ENCODE measurements at regions of chr10 and their contacts with region 1.

Region 1: GRCh38 chr10:30013757-30014156 is 45.6 kb downstream of the JCAD start:
- DNase-seq: no peak
- H3K4me3 Mint-ChIP-seq: peak overlapping the region; percentile 70
- H3K27ac Mint-ChIP-seq: peak overlapping the region; percentile 94
- H3K4me1 Mint-ChIP-seq: peaks cover 68% of the 10 kb centered on the region
- H3K27me3 Mint-ChIP-seq: no peaks in the 10 kb centered on the region

Region 2: DNA sequence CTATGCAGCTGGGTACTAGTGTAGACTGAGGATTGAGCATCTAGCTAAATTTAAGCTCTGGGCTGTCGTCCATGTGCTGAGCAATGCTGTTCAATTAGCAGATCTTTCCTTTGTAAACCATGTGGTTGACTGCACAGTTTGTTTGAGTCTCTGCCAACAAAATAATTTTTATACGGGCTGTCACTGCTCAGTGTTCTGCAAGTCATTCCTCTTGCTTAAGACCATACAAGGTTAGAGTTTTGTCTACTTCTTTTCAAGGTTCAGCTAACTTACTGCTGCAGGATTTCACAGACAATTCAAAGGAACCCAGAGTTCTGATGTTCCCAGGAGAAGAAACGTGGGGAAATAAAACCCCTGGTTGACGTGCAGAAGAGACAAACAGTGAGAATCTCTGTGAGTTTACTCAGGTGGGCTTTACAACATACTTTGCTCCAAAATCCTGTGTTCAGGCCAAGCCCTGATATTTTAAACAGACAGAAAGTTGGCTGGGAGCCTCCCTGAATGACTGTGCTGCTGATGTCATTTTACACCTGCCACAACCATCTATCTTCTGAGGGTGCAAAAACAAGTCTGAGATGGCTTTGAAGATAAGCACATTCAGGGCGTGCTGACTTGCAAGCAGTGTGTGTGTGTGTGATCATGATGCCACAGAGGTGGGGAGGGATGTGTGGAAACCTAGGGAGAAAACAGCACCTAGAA is 201.9 kb before region 1 on chr10:
- intact Hi-C with region 1: no loop called
- DNase-seq: peak; percentile 51
- H3K4me3 Mint-ChIP-seq: no peak overlapping the region
- H3K27ac Mint-ChIP-seq: peak overlapping the region; percentile 40
- H3K4me1 Mint-ChIP-seq: peaks cover 25% of the 10 kb centered on the region
- H3K27me3 Mint-ChIP-seq: peaks cover 7% of the 10 kb centered on the region

Region 3: DNA sequence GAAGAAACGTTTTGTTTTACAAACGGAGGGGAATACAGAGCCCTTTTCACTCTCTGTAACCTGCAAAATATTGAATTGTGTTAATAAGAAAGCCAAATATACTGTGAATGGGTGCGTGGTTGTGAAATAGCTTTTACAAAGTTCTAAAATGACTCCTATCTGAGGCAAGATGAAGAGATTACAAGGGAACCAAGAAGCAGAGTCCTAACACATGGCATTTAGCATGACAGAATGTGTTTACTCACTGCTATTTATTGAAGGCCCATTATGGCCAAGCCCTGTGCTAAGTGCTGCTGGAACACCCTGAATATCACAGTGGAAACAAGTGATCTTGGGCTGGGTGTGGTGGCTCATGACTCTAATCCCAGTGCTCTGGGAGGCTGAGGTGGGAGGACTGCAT is 32.7 kb after region 1 on chr10:
- intact Hi-C with region 1: loop called (anchors 1 kb)
- DNase-seq: no peak
- H3K4me3 Mint-ChIP-seq: no peak overlapping the region
- H3K27ac Mint-ChIP-seq: peak overlapping the region; percentile 50
- H3K4me1 Mint-ChIP-seq: peaks cover 76% of the 10 kb centered on the region
- H3K27me3 Mint-ChIP-seq: peaks cover 9% of the 10 kb centered on the region

Region 4: GRCh38 chr10:30059209-30060107 is 45.7 kb after region 1 on chr10 and contains the start of gene JCAD:
- intact Hi-C with region 1: no loop called
- DNase-seq: peak; percentile 57
- H3K4me3 Mint-ChIP-seq: peak within 1 kb of the TSS; percentile 73
- H3K27ac Mint-ChIP-seq: no peak within 1 kb of the TSS
- H3K4me1 Mint-ChIP-seq: peaks cover 33% of the 10 kb centered on the region
- H3K27me3 Mint-ChIP-seq: peaks cover 47% of the 10 kb centered on the region
- total RNA-seq, gene JCAD: 3.4 and 3.7 TPM in 2 replicates

Region 5: GRCh38 chr10:30070001-30070685 is 56.4 kb after region 1 on chr10:
- intact Hi-C with region 1: no loop called
- DNase-seq: no peak
- H3K4me3 Mint-ChIP-seq: no peak overlapping the region
- H3K27ac Mint-ChIP-seq: no peak overlapping the region
- H3K4me1 Mint-ChIP-seq: peaks cover 4% of the 10 kb centered on the region
- H3K27me3 Mint-ChIP-seq: peaks cover 7% of the 10 kb centered on the region

Region 6: DNA sequence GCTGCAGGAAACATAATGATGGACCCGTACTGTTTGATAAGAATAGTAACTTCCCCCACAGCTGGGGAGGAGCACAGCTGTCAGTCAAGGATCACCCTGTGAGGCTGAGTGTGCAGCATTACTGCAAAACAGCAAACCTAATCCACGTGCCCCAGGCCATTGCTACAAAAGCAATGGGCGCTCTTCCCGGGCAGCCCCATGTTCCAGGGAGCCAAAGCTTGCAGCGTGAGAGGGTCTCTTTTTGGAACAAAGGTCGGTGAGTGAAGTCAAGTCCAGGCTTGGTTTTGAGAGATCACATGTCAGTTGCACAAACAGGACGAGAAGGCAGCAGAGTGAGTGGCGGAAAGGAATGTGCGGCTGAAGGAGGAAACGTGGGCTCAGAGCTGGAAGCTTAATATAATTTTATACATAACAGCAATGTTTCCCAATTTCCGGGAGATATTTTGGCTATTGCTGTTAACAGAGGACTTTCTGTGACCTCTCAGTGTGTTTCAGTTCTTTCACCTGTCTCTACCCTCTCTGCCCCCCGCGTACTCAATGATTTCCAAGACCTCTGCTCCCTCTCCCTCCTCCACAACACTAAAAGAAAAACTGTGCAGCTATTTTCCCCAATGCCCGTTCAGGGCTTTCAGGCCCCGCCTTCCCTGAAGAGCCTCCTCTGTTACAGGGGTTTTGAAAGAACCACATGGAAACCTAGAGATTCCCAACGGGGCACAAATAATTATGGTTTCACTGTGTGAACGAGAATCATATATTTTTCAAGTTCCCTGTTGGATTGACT is 206.4 kb after region 1 on chr10:
- intact Hi-C with region 1: no loop called
- DNase-seq: no peak
- H3K4me3 Mint-ChIP-seq: peak overlapping the region; percentile 38
- H3K27ac Mint-ChIP-seq: no peak overlapping the region
- H3K4me1 Mint-ChIP-seq: peaks cover 17% of the 10 kb centered on the region
- H3K27me3 Mint-ChIP-seq: peaks cover 21% of the 10 kb centered on the region

Region 7: DNA sequence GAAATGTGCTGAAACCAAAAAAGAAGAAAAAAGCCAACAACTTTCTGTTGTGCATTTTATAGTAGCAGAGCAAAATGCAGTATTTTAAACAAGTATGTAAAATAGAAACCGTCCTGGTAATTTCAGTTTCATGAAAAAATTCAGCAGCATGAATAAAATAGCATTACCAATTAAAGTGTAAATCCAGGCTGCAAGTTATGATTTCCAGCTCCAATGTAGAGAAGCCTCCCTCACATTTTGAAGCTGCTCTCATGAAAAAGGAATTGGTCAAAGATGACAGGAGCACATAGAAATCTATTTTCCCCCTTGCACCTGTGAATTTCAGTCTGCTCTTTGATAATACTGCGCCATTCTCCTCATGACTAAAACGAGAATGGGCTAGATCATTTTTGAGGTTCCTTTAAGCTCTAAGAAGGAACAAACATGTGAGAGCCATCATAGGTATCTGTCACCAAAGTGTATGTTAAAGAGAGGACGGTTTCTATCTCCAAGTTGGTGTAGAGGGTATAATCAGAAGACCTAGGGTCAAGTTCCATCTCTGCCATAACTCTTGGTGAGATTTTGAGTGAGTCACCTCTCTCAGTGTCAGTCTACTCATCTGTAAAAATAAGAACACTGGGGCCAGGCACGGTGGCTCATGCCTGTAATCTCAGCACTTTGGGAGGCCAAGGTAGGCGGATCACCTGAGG is 227.8 kb after region 1 on chr10:
- intact Hi-C with region 1: loop called (anchors 5 kb)
- DNase-seq: no peak
- H3K4me3 Mint-ChIP-seq: no peak overlapping the region
- H3K27ac Mint-ChIP-seq: no peak overlapping the region
- H3K4me1 Mint-ChIP-seq: peaks cover 24% of the 10 kb centered on the region
- H3K27me3 Mint-ChIP-seq: no peaks in the 10 kb centered on the region